Lower leg skin (tissue), 4 donors: ENCODE measurements at regions of chr7 and their contacts with region 1.

Region 1: GRCh38 chr7:143329471-143330170 is 13.7 kb downstream of the CLCN1 start:
- DNase-seq: no peak
- H3K4me3 ChIP-seq: no peak overlapping the region
- CTCF ChIP-seq: no peak
- POLR2A ChIP-seq: no peak

Region 2: GRCh38 chr7:143362131-143363015 is 32.8 kb after region 1 on chr7 and contains the start of gene FAM131B:
- intact Hi-C with region 1: loop called (anchors 1 kb)
- DNase-seq: no peak
- H3K4me3 ChIP-seq: peak within 1 kb of the TSS; percentile 26
- CTCF ChIP-seq: no peak
- POLR2A ChIP-seq: no peak
- total RNA-seq, gene FAM131B: 0.27 to 1.4 (median 0.42) TPM in 3 of 4 donors, not detected in the other